Activated T-helper 2 cell treated with anti-CD3 and anti-CD28 coated beads, Interferon-gamma antibody, Interleukin-2, Interleukin-4, amounts not matched to agents 10 μg/mL and 5 μg/mL and 100 μg/mL, durations not matched to agents 14 hours and 24 hours and 36 hours (primary cell): ENCODE measurements at regions of chr4 and their contacts with region 1.

Region 1: DNA sequence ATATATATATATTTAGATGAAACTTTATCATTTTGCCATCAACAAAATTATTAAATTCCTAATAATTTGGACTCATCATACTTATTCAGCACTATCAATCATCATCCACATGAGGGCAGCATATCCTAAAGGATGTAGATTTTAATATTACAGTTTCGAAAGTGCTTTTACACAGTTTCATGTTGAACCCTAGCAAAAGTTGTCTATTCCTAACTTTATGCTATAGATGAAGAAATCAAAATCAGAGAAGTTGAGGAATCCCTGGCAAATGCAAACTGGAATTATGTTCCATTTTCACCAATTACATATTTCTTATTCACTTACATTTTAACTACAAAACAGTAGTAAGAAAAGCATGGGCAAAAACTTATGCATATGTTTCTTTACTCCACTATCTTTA is 36.6 kb upstream of the UGT2A1 start:
- DNase-seq: no peak
- H3K4me3 Mint-ChIP-seq: no peak overlapping the region
- H3K27ac Mint-ChIP-seq: no peak overlapping the region
- H3K4me1 Mint-ChIP-seq: peaks cover 1% of the 10 kb centered on the region
- H3K27me3 Mint-ChIP-seq: no peaks in the 10 kb centered on the region

Region 2: GRCh38 chr4:69823481-69824186 is 134.0 kb after region 1 on chr4:
- intact Hi-C with region 1: loop called (anchors 1 kb)
- DNase-seq: peak; percentile 28
- H3K4me3 Mint-ChIP-seq: no peak overlapping the region
- H3K27ac Mint-ChIP-seq: no peak overlapping the region
- H3K4me1 Mint-ChIP-seq: no peaks in the 10 kb centered on the region
- H3K27me3 Mint-ChIP-seq: no peaks in the 10 kb centered on the region

Region 3: GRCh38 chr4:69843932-69844331 is 154.3 kb after region 1 on chr4:
- intact Hi-C with region 1: no loop called
- DNase-seq: no peak
- H3K4me3 Mint-ChIP-seq: no peak overlapping the region
- H3K27ac Mint-ChIP-seq: no peak overlapping the region
- H3K4me1 Mint-ChIP-seq: peaks cover 2% of the 10 kb centered on the region
- H3K27me3 Mint-ChIP-seq: peaks cover 5% of the 10 kb centered on the region

Region 4: GRCh38 chr4:69881173-69881773 is 191.7 kb after region 1 on chr4:
- intact Hi-C with region 1: loop called (anchors 1 kb)
- DNase-seq: no peak
- H3K4me3 Mint-ChIP-seq: no peak overlapping the region
- H3K27ac Mint-ChIP-seq: no peak overlapping the region
- H3K4me1 Mint-ChIP-seq: no peaks in the 10 kb centered on the region
- H3K27me3 Mint-ChIP-seq: no peaks in the 10 kb centered on the region

Region 5: GRCh38 chr4:70183168-70183939 is 493.8 kb after region 1 on chr4:
- intact Hi-C with region 1: loop called (anchors 2 kb)
- DNase-seq: no peak
- H3K4me3 Mint-ChIP-seq: no peak overlapping the region
- H3K27ac Mint-ChIP-seq: no peak overlapping the region
- H3K4me1 Mint-ChIP-seq: no peaks in the 10 kb centered on the region
- H3K27me3 Mint-ChIP-seq: no peaks in the 10 kb centered on the region

Region 6: GRCh38 chr4:70505151-70505748 is 815.7 kb after region 1 on chr4:
- intact Hi-C with region 1: loop called (anchors 2 kb)
- DNase-seq: peak; percentile 24
- H3K4me3 Mint-ChIP-seq: no peak overlapping the region
- H3K27ac Mint-ChIP-seq: no peak overlapping the region
- H3K4me1 Mint-ChIP-seq: no peaks in the 10 kb centered on the region
- H3K27me3 Mint-ChIP-seq: no peaks in the 10 kb centered on the region